ENCODE measurements at regions of chr16 and their contacts with region 1.

Region 1: GRCh38 chr16:85448557-85449197 is 164.4 kb upstream of the GSE1 start:
- DNase-seq: peak in 1 of 2 donors; percentile 78
- H3K4me3 ChIP-seq: no peak overlapping the region
- H3K27ac ChIP-seq: peak overlapping the region; percentile 60 to 76
- H3K4me1 ChIP-seq: peaks cover 3 to 16% of the 10 kb centered on the region in 2 donors
- H3K27me3 ChIP-seq: no peaks in the 10 kb centered on the region
- CTCF ChIP-seq: no peak
- POLR2A ChIP-seq: no peak

Region 2: DNA sequence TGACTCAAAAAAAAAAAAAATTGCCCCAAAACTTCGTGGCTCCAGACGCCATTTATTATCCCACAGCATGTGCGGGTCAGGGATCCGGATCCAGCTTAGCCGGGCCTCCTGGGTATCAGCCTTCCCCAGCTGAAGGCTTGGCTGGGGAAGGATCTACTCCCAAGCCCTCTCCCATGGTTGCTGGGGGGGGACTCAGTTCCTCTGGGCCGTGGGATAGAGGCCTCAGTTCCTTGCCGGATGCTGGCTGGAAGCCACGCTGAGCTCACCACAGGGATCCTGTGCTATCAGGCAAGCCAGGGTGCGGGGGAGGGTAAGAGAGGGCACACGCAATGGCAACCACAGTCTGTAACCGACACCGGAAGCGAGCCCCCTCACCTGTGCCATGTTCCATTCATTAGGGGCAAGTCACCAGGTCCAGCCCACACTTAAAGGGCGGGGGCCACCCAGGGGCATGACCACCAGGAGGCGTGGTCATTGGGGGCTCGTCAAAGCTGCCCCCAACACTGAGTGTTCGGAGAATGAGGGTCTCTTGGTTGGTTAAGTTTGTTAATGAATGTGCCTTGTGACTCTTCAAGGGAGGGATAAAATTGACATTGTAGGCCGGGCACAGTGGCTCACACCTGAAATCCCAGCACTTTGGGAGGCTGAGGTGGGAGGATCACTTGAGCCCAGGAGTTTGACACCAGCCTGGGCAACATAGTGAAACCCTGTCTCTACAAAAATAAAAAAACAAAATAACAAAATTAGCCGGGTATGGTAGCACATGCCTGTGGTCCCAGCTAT is 45.6 kb before region 1 on chr16:
- intact Hi-C with region 1: no loop called
- DNase-seq: no peak
- H3K4me3 ChIP-seq: no peak overlapping the region
- H3K27ac ChIP-seq: no peak overlapping the region
- H3K4me1 ChIP-seq: no peaks in the 10 kb centered on the region
- H3K27me3 ChIP-seq: no peaks in the 10 kb centered on the region
- CTCF ChIP-seq: no peak
- POLR2A ChIP-seq: no peak

Region 3: GRCh38 chr16:85477801-85478363 is 29.2 kb after region 1 on chr16:
- intact Hi-C with region 1: loop called (anchors 2 kb)
- DNase-seq: no peak
- H3K4me3 ChIP-seq: no peak overlapping the region
- H3K27ac ChIP-seq: no peak overlapping the region
- H3K4me1 ChIP-seq: no peaks in the 10 kb centered on the region
- H3K27me3 ChIP-seq: no peaks in the 10 kb centered on the region
- CTCF ChIP-seq: no peak
- POLR2A ChIP-seq: no peak

Region 4: DNA sequence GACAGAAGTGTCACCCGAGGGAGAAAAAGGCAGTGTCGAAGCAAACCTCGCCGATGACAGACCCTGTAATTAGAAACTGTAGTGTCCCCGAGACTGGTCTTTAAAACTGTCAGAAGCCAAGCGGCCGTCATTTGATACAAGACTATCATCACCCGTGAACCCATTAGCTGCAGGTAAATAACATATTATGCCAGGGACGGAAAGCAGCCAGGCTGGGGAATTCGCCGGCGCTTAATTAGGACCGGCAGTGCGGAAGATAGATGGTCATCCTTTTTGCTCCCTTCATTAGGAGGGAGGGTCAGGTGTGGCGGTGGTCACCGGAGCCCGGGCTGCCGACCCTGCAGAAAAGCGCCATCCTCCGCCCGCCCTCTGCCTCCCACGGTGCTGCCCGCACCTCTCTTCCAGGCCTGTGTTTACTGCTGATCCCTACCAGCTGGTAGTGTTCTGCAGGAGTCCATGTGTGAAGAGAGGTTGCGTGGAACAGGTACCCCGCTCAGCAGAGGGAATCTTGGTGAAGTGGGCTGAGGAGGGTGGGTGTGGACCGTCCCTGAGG is 55.1 kb after region 1 on chr16:
- intact Hi-C with region 1: no loop called
- DNase-seq: no peak
- H3K4me3 ChIP-seq: no peak overlapping the region
- H3K27ac ChIP-seq: no peak overlapping the region
- H3K4me1 ChIP-seq: no peaks in the 10 kb centered on the region
- H3K27me3 ChIP-seq: no peaks in the 10 kb centered on the region
- CTCF ChIP-seq: no peak
- POLR2A ChIP-seq: no peak